A549 (cell line): ENCODE measurements at regions of chr19 and their contacts with region 1.

Region 1: DNA sequence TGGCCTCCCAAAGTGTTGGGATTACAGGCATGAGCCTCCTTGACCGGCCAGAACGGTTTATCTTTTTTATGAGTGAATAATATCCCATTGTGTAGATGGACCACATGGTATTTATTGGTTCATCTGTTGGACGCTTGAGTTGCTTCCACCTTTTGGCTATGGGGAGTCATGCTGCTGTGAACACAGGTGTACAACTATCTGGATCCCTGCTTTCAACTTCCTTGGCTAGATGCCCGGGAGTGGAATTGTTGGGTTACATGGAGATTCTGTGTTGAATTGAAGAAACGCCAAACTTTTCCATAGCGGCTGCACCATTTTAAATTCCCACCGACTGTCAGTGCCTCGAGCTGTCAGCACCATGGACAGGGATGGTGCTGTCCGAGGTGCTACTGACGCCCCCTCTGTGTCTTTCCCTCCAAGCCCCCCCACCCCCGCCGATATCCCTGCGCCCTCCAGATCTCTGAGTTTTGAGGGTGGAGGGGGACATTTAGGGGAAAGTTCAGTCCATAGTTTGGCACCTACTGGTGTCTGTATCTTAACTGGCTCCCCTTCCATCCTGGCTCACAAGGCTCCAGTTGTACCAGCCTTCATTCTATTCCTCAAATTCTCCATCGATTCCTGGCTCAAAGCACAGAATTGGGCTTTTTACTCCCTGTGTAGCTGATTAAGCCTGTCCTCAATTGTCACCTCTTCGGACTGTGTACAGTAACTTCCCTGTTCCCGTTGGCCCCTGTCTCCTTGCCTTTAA is 27.3 kb downstream of the PNPLA6 start:
- DNase-seq: no peak
- ATAC-seq: no peak
- H3K4me3 ChIP-seq: no peak overlapping the region
- H3K27ac ChIP-seq: no peak overlapping the region
- H3K4me1 ChIP-seq: no peaks in the 10 kb centered on the region
- CTCF ChIP-seq: no peak
- EP300 ChIP-seq: no peak
- POLR2A ChIP-seq: no peak
- RAD21 ChIP-seq: no peak

Region 2: GRCh38 chr19:7460562-7460966 is 102.3 kb before region 1 on chr19:
- CTCF ChIA-PET with region 1: no interaction called
- POLR2A ChIA-PET with region 1: no interaction called
- DNase-seq: no peak
- ATAC-seq: no peak
- H3K4me3 ChIP-seq: no peak overlapping the region
- H3K27ac ChIP-seq: no peak overlapping the region
- H3K4me1 ChIP-seq: no peaks in the 10 kb centered on the region
- CTCF ChIP-seq: no peak
- EP300 ChIP-seq: no peak
- POLR2A ChIP-seq: no peak
- RAD21 ChIP-seq: no peak

Region 3: GRCh38 chr19:7500811-7501450 is 61.9 kb before region 1 on chr19:
- CTCF ChIA-PET with region 1: no interaction called
- POLR2A ChIA-PET with region 1: no interaction called
- DNase-seq: peak; percentile 65 to 89
- ATAC-seq: peak; percentile 62 to 75
- H3K4me3 ChIP-seq: peak overlapping the region; percentile 41
- H3K27ac ChIP-seq: peak overlapping the region; percentile 59 to 78; a peak in 5 of 6 replicates
- H3K4me1 ChIP-seq: peaks cover 6% of the 10 kb centered on the region; the same call in 2 of the 3 replicates
- CTCF ChIP-seq: no peak
- EP300 ChIP-seq: no peak
- POLR2A ChIP-seq: peak; percentile 79
- RAD21 ChIP-seq: no peak

Region 4: GRCh38 chr19:7540761-7541491 is 21.9 kb before region 1 on chr19:
- CTCF ChIA-PET with region 1: interaction called, 10 read pairs
- POLR2A ChIA-PET with region 1: no interaction called
- DNase-seq: peak in 1 of 2 experiments; percentile 50
- ATAC-seq: peak; percentile 67 to 80; a peak in 4 of 6 replicates
- H3K4me3 ChIP-seq: no peak overlapping the region
- H3K27ac ChIP-seq: no peak overlapping the region
- H3K4me1 ChIP-seq: peaks cover 5% of the 10 kb centered on the region; the same call in 1 of the 3 replicates
- CTCF ChIP-seq: no peak
- EP300 ChIP-seq: no peak
- POLR2A ChIP-seq: no peak
- RAD21 ChIP-seq: no peak

Region 5: GRCh38 chr19:7578127-7578526 is 15.3 kb after region 1 on chr19:
- CTCF ChIA-PET with region 1: interaction called, 20 read pairs
- POLR2A ChIA-PET with region 1: no interaction called
- DNase-seq: no peak
- ATAC-seq: no peak
- H3K4me3 ChIP-seq: no peak overlapping the region
- H3K27ac ChIP-seq: no peak overlapping the region
- H3K4me1 ChIP-seq: no peaks in the 10 kb centered on the region
- CTCF ChIP-seq: no peak
- EP300 ChIP-seq: no peak
- POLR2A ChIP-seq: no peak
- RAD21 ChIP-seq: no peak

Region 6: GRCh38 chr19:7595466-7596133 is 32.8 kb after region 1 on chr19 and contains the start of gene CAMSAP3:
- CTCF ChIA-PET with region 1: interaction called, 26 read pairs
- POLR2A ChIA-PET with region 1: no interaction called
- DNase-seq: peak in 1 of 2 experiments; percentile 17
- ATAC-seq: peak; percentile 75 to 86
- H3K4me3 ChIP-seq: peak within 1 kb of the TSS; percentile 85
- H3K27ac ChIP-seq: peak within 1 kb of the TSS; percentile 80 to 91
- H3K4me1 ChIP-seq: 0 out of 3 replicates have a peak, but pooled peaks cover 5% of the 10 kb centered on the region
- CTCF ChIP-seq: no peak
- EP300 ChIP-seq: no peak
- POLR2A ChIP-seq: no peak
- RAD21 ChIP-seq: no peak
- polyA plus RNA-seq, gene CAMSAP3: 0.81 and 1.3 TPM in 2 replicates

Region 7: GRCh38 chr19:7633698-7634097 is 70.9 kb after region 1 on chr19 and contains the start of gene PCP2:
- CTCF ChIA-PET with region 1: interaction called, 12 read pairs
- POLR2A ChIA-PET with region 1: interaction called, 3 read pairs
- DNase-seq: no peak
- ATAC-seq: no peak
- H3K4me3 ChIP-seq: no peak within 1 kb of the TSS
- H3K27ac ChIP-seq: no peak within 1 kb of the TSS
- H3K4me1 ChIP-seq: peaks cover 7% of the 10 kb centered on the region; the same call in 1 of the 3 replicates
- CTCF ChIP-seq: no peak
- EP300 ChIP-seq: no peak
- POLR2A ChIP-seq: no peak
- RAD21 ChIP-seq: no peak
- polyA plus RNA-seq, gene PCP2: not detected in 2 replicates

Region 8: DNA sequence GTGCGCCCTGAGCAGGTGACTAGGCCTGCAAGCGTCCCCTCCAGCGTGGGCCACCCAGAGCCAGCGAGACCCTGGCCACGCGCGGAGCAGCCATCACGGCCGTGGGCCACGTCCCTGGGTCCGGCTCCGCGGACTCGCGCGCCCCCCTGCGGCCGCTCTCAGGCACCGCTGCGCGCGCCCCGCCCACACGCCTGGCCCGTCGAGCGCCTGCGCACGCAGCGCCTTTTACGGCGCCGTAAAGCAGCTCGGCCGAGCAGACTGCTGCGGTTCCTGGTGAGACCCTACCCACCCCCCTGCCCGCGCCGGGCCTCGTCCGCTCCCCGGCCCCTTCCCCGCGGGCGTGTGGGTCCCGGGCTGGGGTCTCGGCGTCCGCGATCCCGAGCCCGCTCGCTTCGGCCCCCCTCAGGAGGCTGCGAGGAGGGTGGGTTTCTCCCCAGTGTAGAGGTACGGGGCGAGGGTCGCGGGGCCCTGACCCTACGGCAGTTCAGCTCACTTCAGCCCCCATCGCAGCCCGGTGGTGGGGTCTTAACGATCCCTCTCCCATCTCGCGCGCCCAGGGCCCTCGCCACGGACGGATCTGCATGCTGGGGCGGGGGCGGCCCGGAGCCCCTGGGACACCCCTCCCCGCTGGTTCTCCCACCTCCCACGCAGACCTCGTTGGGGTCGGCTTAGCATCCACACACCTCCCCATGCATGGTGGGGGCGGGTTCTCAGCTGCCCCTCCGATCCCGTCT is 118.0 kb after region 1 on chr19 and contains the start of gene TRAPPC5:
- CTCF ChIA-PET with region 1: interaction called, 45 read pairs
- POLR2A ChIA-PET with region 1: interaction called, 5 read pairs
- DNase-seq: peak; percentile 39 to 75
- ATAC-seq: peak; percentile 70 to 83
- H3K4me3 ChIP-seq: peak within 1 kb of the TSS; percentile 99
- H3K27ac ChIP-seq: peak within 1 kb of the TSS; percentile 99
- H3K4me1 ChIP-seq: peaks cover 10% of the 10 kb centered on the region; the same call in 2 of the 3 replicates
- CTCF ChIP-seq: peak; percentile 88
- EP300 ChIP-seq: no peak
- POLR2A ChIP-seq: peak; percentile 61
- RAD21 ChIP-seq: peak; percentile 68 to 89
- polyA plus RNA-seq, gene TRAPPC5: 23.8 and 31.6 TPM in 2 replicates

Region 9: GRCh38 chr19:7799640-7800355 is 237.0 kb after region 1 on chr19:
- CTCF ChIA-PET with region 1: interaction called, 60 read pairs
- POLR2A ChIA-PET with region 1: interaction called, 4 read pairs
- DNase-seq: peak; percentile 45 to 67
- ATAC-seq: peak; percentile 77 to 83
- H3K4me3 ChIP-seq: peak overlapping the region; percentile 24; the same call in 1 of the 3 replicates
- H3K27ac ChIP-seq: no peak overlapping the region
- H3K4me1 ChIP-seq: no peaks in the 10 kb centered on the region
- CTCF ChIP-seq: peak; percentile 60
- EP300 ChIP-seq: no peak
- POLR2A ChIP-seq: no peak
- RAD21 ChIP-seq: peak; percentile 68 to 75